Sciatic nerve (tissue), 2 donors: ENCODE measurements at regions of chr6 and their contacts with region 1.

Region 1: DNA sequence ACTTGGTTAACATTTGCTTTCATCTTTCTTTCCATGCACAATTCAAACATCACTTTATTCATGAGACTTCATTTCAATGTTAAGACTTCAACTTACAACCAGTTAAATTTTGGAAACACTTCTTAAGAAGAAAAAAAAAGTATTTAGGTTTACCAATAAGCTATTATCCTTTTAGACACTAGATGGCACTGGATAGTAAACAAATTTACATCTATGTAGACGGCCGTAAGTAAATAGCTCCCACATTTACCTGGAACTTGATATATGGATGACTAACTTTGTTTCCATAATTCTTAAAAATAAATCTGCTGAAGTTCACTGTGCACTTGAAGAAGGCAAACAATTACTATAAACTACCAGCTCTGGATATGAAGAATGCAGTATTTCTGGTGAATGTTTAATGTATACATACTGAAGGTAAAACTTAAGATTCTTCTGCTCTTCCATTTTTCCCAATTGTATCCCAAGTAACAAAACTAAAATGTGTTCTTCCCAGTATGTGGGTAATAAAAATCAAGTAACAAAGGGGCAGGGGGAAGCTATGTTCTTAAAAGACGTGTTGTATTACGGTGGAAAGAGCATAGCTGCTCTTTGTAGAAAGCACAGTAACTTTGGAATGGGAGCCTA is 130.6 kb upstream of the C6orf118 start:
- DNase-seq: no peak
- ATAC-seq: no peak

Region 2: DNA sequence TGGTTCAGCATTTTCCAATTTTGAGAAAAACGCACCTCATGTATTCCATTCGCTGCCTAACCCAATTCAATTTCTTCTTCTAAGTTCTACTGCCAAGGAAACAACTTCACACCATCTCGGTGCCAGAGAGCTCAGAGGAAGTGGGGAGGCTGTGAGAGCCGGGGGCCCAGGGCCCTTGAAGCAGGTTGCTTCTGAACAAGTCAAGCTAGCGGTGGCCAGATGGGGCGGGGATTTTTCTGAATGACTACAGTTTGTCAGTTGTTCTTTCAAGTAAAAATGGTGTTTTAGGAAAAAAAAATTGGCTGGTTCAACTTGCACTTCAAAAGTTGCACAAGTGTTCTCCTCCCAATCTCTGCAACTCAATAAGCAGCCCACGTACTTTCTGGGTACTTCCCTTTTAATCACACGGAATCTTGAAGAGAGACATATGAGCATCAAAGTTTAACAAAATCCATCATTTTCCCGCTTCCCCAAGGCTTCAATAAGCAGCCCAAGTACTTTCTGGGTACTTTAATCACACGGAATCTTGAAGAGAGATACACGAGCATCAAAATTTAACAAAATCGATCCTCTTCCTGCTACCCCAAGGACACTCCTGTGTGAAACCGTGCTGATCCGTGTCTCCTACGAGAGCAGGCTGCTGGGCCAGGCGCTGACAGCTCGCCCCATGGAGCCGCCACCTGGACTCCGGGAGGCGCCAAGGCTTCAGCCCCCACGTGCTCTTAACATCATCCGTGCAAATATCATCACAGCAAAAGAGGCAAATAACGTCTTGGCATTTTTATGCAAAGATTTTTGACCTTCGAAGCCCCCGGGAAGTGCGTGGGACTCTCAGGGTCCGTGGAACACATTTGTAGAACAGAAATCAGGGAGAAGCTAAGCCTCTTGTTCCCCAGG is 409.7 kb after region 1 on chr6:
- intact Hi-C with region 1: loop called (anchors 10 kb)
- DNase-seq: no peak
- ATAC-seq: peak; percentile 27